Lower leg skin (tissue), 4 donors: ENCODE measurements at regions of chr10 and their contacts with region 1.

Region 1: GRCh38 chr10:103888113-103888841 is 29.7 kb downstream of the STN1 start:
- DNase-seq: peak; percentile 55 to 93
- H3K4me3 ChIP-seq: no peak overlapping the region
- CTCF ChIP-seq: peak in 1 of 3 donors; percentile 80
- POLR2A ChIP-seq: no peak

Region 2: GRCh38 chr10:103592186-103593021 is 295.9 kb before region 1 on chr10:
- intact Hi-C with region 1: loop called (anchors 10 kb)
- DNase-seq: no peak
- H3K4me3 ChIP-seq: no peak overlapping the region
- CTCF ChIP-seq: no peak
- POLR2A ChIP-seq: no peak

Region 3: DNA sequence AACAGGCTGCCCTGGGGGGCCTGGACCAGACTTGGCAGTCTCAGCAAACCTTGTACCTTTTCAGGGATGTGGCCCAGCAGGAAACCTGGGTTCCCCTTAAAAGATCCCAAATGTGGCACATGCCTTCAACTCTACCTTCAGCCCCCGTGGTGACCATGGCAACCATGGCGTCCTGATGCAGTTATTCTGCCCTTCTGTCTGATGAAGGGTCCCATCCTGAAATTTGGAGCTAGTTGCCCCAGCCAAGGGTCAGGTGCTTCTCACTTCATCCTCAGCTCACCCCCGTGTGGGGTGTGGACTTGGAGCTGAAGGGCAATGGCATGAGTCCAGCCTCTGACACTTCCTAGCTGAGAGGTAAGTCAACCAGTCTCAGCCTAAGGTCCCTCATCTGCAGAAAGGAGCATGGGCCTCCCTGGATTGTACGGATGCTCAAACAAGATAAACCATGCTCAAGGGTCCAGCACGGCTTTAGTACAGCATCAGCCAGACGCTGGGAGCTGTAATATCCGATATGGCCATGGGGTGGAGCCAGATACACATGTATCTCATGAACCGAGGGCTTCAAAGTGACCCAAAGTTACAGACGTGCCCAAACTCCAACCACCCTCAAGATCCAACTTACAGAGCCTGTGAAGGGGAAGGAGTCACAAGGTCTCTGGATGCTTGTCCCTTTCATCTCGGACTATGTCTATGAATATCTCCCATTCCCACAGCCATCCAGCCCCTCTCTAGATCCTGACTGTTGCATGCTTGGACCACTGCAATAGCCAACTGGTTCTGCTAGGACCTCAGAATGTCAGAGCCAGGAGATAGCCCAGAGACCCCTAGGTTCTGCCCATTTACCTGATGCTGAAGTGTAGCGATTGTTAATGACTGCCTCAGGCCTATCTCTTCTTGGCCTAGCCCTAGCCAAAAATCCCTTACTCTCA is 175.4 kb before region 1 on chr10:
- intact Hi-C with region 1: loop called (anchors 5 kb)
- DNase-seq: peak; percentile 87 to 97
- H3K4me3 ChIP-seq: no peak overlapping the region
- CTCF ChIP-seq: peak in 1 of 3 donors; percentile 92
- POLR2A ChIP-seq: no peak

Region 4: GRCh38 chr10:104209575-104210198 is 321.4 kb after region 1 on chr10:
- intact Hi-C with region 1: loop called (anchors 5 kb)
- DNase-seq: no peak
- H3K4me3 ChIP-seq: no peak overlapping the region
- CTCF ChIP-seq: no peak
- POLR2A ChIP-seq: no peak

Region 5: DNA sequence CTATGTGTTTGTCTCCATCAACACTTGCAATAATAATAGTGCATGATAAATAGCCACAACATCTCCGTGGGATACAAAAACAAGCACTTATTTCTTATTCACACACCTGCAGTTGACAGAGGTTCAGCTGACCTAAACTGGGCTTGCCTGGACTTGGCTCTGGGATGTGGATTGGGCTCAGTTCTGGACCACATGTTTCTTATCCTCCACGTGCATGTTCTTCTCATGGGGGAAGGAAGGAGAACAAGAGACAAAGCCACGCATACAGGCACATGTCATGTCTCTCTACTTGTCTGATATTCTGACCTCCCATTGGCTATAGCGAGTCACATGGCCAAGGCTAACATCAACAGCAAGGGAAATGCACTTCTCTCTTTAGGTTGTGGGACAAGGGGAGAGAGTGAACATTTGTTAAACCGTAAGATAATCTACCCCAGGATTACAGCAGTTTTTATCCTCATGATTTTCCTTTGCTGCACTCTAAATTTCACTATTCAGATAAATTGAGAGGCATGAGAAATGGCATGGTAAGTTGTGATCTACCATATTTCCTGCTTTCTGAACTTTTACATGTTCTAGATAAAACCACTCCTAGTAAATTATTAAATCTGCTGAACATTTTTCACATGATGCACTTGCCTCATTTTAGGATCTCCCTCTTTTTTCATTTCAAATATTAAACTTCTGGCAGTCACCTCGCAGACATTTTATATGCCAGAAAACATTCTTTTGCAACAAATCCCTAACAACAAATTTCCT is 499.0 kb after region 1 on chr10:
- intact Hi-C with region 1: no loop called
- DNase-seq: no peak
- H3K4me3 ChIP-seq: no peak overlapping the region
- CTCF ChIP-seq: no peak
- POLR2A ChIP-seq: no peak

Region 6: GRCh38 chr10:104678658-104679057 is 790.4 kb after region 1 on chr10:
- intact Hi-C with region 1: no loop called
- DNase-seq: no peak
- H3K4me3 ChIP-seq: no peak overlapping the region
- CTCF ChIP-seq: no peak
- POLR2A ChIP-seq: no peak